ENCODE measurements at regions of chr22 and their contacts with region 1.

Region 1: DNA sequence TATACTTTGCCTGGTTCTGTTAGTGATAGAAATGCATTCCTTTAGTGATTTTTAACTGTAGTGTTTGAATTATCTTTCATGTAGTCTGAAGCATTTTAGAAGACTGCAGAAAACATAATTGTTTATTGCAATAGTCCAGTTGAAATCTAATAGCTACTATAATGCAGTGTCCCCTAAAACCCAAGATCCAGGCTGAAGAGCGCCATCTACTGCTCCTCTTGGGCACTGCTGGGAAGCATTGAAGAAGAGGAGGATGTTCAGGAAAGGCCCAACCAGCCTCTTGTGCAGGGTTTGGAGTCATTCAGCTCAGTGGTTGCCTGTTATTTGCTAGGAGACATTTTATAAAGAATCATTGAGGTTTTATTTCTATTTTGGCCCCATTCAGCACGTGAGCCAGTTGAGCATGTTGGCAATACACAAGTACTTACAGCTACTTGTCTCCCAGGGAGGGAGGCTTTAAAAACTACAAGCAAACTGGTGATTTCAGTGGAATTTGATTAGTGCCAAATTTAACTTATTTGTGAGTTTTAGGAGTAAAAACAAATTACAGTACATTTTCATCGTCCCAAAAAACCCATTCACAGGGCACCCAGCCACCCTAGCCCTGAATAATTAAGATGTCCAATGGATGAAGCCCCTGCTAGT is 74.9 kb upstream of the HORMAD2 start:
- DNase-seq: peak; percentile 81
- H3K4me3 Mint-ChIP-seq: no peak overlapping the region
- H3K27ac Mint-ChIP-seq: no peak overlapping the region
- H3K4me1 Mint-ChIP-seq: peaks cover 16% of the 10 kb centered on the region
- H3K27me3 Mint-ChIP-seq: no peaks in the 10 kb centered on the region

Region 2: GRCh38 chr22:29587938-29588699 is 417.2 kb before region 1 on chr22:
- CTCF ChIA-PET with region 1: no interaction called
- intact Hi-C with region 1: loop called (anchors 1 kb)
- DNase-seq: no peak
- H3K4me3 Mint-ChIP-seq: no peak overlapping the region
- H3K27ac Mint-ChIP-seq: no peak overlapping the region
- H3K4me1 Mint-ChIP-seq: peaks cover 8% of the 10 kb centered on the region
- H3K27me3 Mint-ChIP-seq: no peaks in the 10 kb centered on the region

Region 3: GRCh38 chr22:29727131-29727523 is 278.2 kb before region 1 on chr22:
- CTCF ChIA-PET with region 1: interaction called, 5 read pairs
- intact Hi-C with region 1: loop called (anchors 1 kb)
- DNase-seq: peak; percentile 39
- H3K4me3 Mint-ChIP-seq: no peak overlapping the region
- H3K27ac Mint-ChIP-seq: no peak overlapping the region
- H3K4me1 Mint-ChIP-seq: no peaks in the 10 kb centered on the region
- H3K27me3 Mint-ChIP-seq: no peaks in the 10 kb centered on the region

Region 4: DNA sequence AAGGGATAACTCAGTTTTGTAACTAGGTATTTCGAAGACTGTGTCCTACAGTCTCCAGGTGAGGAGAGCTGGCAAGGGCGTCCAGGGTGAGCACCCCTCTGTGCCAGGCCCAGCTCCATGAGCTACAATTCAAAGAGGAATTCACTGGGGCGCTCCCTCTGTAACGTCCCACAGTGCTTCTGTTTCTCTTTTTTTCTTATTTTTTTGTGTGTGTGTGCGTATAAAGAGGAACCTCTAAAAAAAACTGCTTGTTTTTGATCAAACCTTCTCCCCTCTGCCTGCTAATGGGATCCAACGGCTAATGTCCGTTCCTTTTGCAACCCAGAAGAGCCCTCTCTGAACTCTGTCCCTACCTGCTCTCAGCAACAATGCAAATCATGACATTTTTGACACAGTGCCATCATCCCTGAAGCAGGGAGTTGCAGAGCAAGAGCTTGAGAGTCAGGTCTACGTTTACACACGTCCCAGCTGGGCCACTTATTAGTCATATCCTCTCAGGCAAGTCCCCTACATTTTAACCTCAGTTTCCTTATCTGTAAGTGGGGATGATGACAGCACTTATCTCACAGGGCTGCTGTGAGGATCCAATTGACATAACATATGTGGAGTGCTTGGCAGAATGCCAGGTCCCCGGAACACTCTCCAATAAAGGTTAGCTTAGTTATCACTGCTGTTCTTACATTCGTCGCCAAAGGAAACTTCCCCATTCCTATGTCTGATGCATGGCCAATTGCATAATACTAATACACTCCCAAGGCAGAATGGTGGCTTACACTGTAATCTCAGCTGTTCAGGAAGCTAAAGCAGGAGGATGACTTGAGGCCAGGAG is 184.2 kb before region 1 on chr22:
- CTCF ChIA-PET with region 1: interaction called, 9 read pairs
- intact Hi-C with region 1: loop called (anchors 5 kb)
- DNase-seq: peak; percentile 86
- H3K4me3 Mint-ChIP-seq: no peak overlapping the region
- H3K27ac Mint-ChIP-seq: peak overlapping the region; percentile 83
- H3K4me1 Mint-ChIP-seq: peaks cover 15% of the 10 kb centered on the region
- H3K27me3 Mint-ChIP-seq: no peaks in the 10 kb centered on the region

Region 5: DNA sequence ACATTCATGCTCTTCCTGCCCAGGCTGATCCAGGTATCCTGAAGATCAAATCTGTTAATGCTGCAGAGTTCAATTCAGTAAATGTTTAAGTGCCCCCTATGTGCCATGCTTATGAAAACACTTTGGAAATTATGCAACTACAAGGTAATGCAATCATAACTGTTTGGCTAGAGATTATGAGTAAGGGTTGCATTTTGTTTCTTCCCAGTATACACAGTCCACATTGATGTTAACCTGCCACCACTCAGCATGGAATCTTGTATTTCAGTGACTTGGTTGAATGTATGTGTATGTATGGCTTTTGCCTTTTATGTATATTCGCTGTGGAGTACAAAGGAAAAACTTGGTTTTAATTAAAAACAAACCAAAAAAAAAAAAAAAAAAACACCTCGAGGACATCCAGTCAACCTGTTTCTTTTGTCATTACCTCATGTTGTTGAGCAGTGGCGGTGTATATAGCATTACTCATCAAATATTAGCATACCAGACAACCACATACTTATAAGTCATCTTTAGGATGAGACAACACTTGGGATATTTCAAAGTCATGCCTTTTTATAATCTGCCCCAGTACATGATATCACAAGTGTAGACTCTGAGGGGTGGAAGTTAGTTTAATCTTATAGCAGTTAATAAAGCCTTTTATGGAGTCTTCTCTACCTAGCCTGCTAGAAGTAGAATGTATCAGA is 11.2 kb before region 1 on chr22:
- CTCF ChIA-PET with region 1: interaction called, 22 read pairs
- intact Hi-C with region 1: no loop called
- DNase-seq: no peak
- H3K4me3 Mint-ChIP-seq: no peak overlapping the region
- H3K27ac Mint-ChIP-seq: no peak overlapping the region
- H3K4me1 Mint-ChIP-seq: peaks cover 14% of the 10 kb centered on the region
- H3K27me3 Mint-ChIP-seq: no peaks in the 10 kb centered on the region

Region 6: GRCh38 chr22:30089655-30089974 is 84.3 kb after region 1 on chr22:
- CTCF ChIA-PET with region 1: interaction called, 10 read pairs
- intact Hi-C with region 1: no loop called
- DNase-seq: no peak
- H3K4me3 Mint-ChIP-seq: no peak overlapping the region
- H3K27ac Mint-ChIP-seq: no peak overlapping the region
- H3K4me1 Mint-ChIP-seq: peaks cover 10% of the 10 kb centered on the region
- H3K27me3 Mint-ChIP-seq: peaks cover 4% of the 10 kb centered on the region

Measured in activated naive CD4-positive, alpha-beta T cell treated with anti-CD3 and anti-CD28 coated beads for 36 hours (primary cell).